Activated T-helper 1 cell treated with anti-CD3 and anti-CD28 coated beads, Interleukin-12 subunit alpha, Interleukin-12 subunit beta, Interleukin-2, Interleukin-4 antibody, amounts not matched to agents 30 ng/mL and 10 ng/mL and 1 ng/mL, durations not matched to agents 14 hours and 24 hours and 36 hours (primary cell): ENCODE measurements at regions of chr1 and their contacts with region 1.

Region 1: DNA sequence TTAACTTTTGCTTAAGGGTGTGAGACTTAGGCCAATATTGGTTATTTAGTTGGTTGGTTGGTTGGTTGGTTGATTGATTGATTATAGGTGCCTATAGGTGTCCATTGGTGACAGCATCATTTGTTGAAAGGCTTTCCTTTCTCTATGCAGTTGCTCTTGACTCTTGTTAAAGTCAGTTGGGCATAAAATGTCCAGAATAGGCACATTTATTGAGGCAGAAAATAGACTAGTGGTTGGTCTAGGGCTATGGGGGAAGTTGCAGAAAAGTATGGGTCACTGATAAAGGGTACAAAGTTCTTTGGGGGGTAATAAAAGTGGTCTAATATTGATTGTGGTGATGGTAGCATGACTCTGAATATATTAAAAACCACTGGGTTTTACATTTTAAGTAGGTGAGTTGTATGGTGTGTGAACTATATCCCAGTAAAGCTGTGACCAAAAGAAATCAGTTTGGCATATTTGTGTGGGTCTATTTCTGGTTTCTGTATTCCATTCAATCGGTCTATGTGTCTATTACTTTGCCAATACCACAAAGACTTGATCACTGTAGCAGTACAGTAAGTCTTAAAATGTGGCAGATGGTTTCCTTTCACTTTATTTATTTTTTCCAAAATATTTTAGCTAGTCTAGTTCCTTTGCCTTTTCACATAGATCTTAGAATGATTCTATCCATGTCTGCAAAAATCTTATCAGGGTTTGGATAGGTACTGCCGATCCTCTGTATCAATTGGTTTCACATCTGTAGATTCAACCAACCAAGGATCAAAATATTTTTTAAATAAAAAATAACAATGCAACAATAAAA is 63.0 kb downstream of the ATP1A1 start:
- DNase-seq: no peak
- H3K4me3 Mint-ChIP-seq: no peak overlapping the region
- H3K27ac Mint-ChIP-seq: peak overlapping the region; percentile 1
- H3K4me1 Mint-ChIP-seq: no peaks in the 10 kb centered on the region
- H3K27me3 Mint-ChIP-seq: peaks cover 16% of the 10 kb centered on the region

Region 2: DNA sequence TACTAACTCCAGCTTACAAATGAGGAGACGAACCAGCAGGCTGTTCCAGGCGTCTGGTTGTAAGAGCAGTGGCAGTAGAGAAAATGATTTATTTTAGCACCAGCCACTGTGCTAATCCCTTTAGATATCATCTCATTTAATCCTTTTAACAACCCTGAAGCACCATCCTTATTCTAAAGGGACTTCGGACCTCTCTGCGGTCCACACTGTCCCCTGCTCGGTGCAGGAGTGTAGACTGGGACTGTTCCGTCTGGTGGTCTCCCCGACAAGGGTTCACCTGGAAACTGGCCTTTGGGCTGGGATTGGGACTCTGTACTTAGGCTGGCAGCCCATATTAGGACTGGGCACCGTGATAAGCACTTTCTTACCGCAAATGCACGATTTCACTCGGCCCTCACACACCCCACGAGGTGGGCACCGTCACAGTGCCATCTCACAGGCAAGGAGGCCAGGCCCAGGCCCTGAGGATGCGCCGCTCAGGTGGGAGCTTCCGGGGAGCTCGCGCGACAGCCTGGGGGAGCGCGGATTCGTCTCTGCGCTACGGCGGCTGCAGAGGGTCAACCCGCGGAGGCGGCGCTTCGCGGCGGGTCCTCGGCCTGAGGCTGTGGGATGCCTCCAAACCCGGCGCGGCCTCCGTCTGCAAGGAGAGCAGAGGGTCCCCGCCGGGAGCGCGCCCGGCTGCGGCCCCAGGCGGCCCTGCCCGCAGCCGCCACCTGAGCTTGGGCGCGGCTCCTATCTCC is 17.7 kb before region 1 on chr1:
- intact Hi-C with region 1: loop called (anchors 1 kb)
- DNase-seq: peak; percentile 84
- H3K4me3 Mint-ChIP-seq: peak overlapping the region; percentile 90
- H3K27ac Mint-ChIP-seq: peak overlapping the region; percentile 83
- H3K4me1 Mint-ChIP-seq: peaks cover 60% of the 10 kb centered on the region
- H3K27me3 Mint-ChIP-seq: peaks cover 6% of the 10 kb centered on the region

Region 3: GRCh38 chr1:116777831-116778830 is 342.1 kb after region 1 on chr1:
- intact Hi-C with region 1: no loop called
- DNase-seq: no peak
- H3K4me3 Mint-ChIP-seq: peak overlapping the region; percentile 54
- H3K27ac Mint-ChIP-seq: peak overlapping the region; percentile 83
- H3K4me1 Mint-ChIP-seq: peaks cover 37% of the 10 kb centered on the region
- H3K27me3 Mint-ChIP-seq: no peaks in the 10 kb centered on the region